GM18951 (cell line): ENCODE measurements at regions of chr2 and their contacts with region 1.

Region 1: GRCh38 chr2:219530048-219530963 is 13.3 kb downstream of the CHPF start:
- POLR2A ChIP-seq: no peak

Region 2: DNA sequence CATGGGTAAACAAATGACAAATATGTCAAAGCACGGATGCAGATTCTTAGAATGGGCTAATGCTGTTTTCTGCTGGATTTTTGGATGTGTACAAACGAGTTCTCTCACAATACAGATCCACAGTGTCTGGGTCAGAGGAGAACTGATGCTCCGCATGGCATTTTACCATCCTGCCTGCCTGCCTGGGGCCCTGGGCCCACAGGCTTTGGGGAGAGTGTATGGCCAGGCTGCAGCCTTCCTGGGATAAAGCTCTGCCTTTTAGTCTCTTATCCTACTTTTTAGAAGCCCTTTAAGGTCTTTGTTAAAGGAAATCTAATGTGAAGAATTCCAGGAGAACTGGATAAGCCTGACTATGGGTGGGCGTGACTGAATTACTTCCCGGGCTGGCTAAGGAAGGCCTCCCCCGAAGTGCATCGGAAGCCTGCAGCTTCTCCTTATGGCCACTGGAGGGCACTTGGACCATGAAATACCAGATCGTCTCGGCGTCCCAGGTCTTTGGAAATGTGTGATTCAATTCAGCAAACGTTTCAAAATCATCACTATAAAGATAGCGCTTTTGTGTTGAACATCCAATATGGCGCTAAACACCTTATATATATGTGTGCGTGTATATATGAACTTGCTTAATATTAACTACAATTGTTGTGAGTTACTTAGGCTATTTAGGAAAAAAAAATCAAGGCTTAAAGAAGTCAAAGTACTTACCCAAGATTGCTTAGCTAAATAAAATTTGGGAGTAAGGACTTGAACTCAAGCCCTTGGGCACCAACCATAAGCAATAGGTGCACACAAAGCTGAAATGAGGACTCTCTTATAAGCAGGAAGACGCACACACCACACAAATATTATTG is 127.4 kb before region 1 on chr2:
- in situ Hi-C with region 1: loop called (anchors 10 kb)
- POLR2A ChIP-seq: no peak